CD8-positive, alpha-beta T cell (primary cell): ENCODE measurements at regions of chr7 and their contacts with region 1.

Region 1: DNA sequence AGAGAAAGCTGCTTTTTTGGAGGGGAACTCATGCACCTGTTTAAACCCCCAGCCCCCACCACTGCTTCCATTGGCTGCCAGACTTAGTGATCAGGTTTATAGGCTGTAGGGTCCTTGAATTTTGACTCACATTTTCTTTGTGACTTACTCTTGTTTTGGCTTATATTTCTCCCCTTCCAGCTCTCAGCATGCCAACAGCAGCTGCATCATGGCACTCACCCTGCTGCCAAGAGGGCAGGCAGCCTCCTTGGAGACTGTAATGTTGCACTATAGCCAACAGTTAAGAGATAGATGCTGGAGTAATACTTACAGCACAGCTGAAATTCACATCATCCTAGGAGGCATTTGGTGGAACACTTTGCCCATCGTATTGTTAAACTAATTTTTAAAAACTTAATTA is 98.0 kb upstream of the GLCCI1 start:
- DNase-seq: no peak
- ATAC-seq: no peak
- H3K4me3 ChIP-seq: no peak overlapping the region
- H3K4me3 Mint-ChIP-seq: no peak overlapping the region
- H3K27ac ChIP-seq: no peak overlapping the region
- H3K27ac Mint-ChIP-seq: no peak overlapping the region
- H3K4me1 ChIP-seq: no peaks in the 10 kb centered on the region
- H3K4me1 Mint-ChIP-seq: no peaks in the 10 kb centered on the region
- H3K27me3 ChIP-seq: no peaks in the 10 kb centered on the region
- H3K27me3 Mint-ChIP-seq: no peaks in the 10 kb centered on the region
- CTCF ChIP-seq: no peak

Region 2: GRCh38 chr7:7819442-7820247 is 50.9 kb before region 1 on chr7:
- CTCF ChIA-PET with region 1: no interaction called
- POLR2A ChIA-PET with region 1: no interaction called
- intact Hi-C with region 1: loop called in 1 of 2 experiments (anchors 10 kb)
- DNase-seq: no peak
- ATAC-seq: no peak
- H3K4me3 ChIP-seq: no peak overlapping the region
- H3K4me3 Mint-ChIP-seq: no peak overlapping the region
- H3K27ac ChIP-seq: no peak overlapping the region
- H3K27ac Mint-ChIP-seq: no peak overlapping the region
- H3K4me1 ChIP-seq: peaks cover 19% of the 10 kb centered on the region
- H3K4me1 Mint-ChIP-seq: peaks cover 39% of the 10 kb centered on the region
- H3K27me3 ChIP-seq: no peaks in the 10 kb centered on the region
- H3K27me3 Mint-ChIP-seq: no peaks in the 10 kb centered on the region
- CTCF ChIP-seq: no peak